ENCODE measurements at regions of chr12 and their contacts with region 1.

Region 1: GRCh38 chr12:110698171-110698902 is 9.4 kb upstream of the HVCN1 start:
- DNase-seq: peak; percentile 78
- H3K4me3 Mint-ChIP-seq: no peak overlapping the region
- H3K27ac Mint-ChIP-seq: peak overlapping the region; percentile 85
- H3K4me1 Mint-ChIP-seq: peaks cover 19% of the 10 kb centered on the region
- H3K27me3 Mint-ChIP-seq: peaks cover 2% of the 10 kb centered on the region

Region 2: DNA sequence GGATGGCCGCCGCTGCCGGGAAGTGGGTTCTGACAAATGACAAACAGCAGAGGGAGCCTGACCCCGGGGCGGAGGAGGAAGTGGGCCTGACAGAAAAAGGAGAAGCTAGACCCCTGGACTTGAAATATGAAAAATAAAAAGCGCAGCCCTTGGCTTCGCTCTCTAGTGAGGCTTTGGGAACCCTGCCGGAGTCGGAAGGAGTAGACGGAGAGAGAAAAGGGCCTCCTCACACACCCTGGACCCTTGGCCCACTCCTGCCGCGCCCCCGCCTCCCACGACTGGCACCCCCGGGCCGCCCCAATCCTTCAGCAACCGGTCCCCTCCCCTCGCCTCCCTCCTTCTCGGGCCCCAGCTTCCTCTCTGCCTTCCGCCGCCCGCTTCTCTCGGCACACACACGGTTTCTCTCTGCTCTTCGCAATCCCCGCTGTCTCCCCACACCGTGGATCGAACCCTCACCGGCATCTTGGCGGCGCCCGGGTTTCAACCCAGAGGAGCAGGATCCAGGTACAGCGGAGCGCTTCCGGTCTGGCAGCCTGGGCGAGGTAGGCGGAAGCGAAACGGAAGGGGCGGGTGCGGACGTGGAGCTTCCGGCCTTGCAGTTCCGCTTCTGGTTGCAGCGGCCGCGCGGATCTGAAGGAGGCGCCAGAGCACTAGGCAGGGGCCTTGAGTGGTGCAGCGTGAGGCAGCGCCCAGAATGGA is 248.4 kb before region 1 on chr12 and contains the start of gene ARPC3:
- intact Hi-C with region 1: loop called (anchors 1 kb)
- DNase-seq: peak; percentile 94
- H3K4me3 Mint-ChIP-seq: peak within 1 kb of the TSS; percentile 100
- H3K27ac Mint-ChIP-seq: peak within 1 kb of the TSS; percentile 100
- H3K4me1 Mint-ChIP-seq: peaks cover 42% of the 10 kb centered on the region
- H3K27me3 Mint-ChIP-seq: no peaks in the 10 kb centered on the region
- total RNA-seq, gene ARPC3: 279 and 290 TPM in 2 replicates

Region 3: GRCh38 chr12:110555577-110556406 is 142.5 kb before region 1 on chr12:
- intact Hi-C with region 1: loop called (anchors 1 kb)
- DNase-seq: no peak
- H3K4me3 Mint-ChIP-seq: no peak overlapping the region
- H3K27ac Mint-ChIP-seq: peak overlapping the region; percentile 57
- H3K4me1 Mint-ChIP-seq: peaks cover 58% of the 10 kb centered on the region
- H3K27me3 Mint-ChIP-seq: no peaks in the 10 kb centered on the region

Region 4: DNA sequence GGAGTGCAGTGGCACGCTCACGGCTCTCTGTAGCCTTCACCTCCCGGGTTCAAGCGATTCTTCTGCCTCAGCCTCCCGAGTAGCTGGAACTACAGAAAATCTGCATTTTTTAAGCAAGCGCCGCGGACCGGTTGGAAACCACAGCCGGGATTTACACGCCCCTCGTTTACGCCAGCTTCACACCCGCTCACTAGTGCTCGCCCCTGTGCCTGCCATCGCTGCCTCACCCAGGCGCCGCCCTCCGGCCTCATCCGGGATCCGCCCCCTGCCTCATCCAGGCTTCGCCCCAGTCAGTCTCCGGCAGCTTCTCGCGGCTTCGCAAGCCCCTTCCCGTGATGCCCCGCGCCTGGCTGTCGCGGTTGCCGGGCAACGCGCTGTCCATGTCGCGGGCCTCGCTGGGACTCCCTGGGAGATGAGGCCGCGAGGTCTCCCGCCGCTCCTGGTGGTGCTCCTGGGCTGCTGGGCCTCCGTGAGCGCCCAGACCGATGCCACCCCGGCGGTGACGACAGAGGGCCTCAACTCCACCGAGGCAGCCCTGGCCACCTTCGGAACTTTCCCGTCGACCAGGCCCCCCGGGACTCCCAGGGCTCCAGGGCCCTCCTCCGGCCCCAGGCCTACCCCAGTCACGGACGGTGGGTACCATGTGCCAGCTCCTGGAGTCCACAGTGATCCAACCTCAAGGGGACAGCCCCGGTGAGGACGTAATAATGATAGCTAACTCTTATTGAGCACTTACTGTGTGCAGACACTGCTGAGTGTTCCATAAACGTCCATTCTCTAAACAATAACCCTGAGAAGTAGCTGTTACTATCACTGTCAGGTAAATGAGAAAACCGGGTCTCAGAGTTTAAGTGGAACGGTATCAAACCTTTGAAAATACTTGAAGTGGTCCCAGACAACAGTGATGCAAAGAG is 84.3 kb before region 1 on chr12 and contains the start of gene TCTN1:
- intact Hi-C with region 1: loop called (anchors 1 kb)
- DNase-seq: peak; percentile 98
- H3K4me3 Mint-ChIP-seq: peak within 1 kb of the TSS; percentile 83
- H3K27ac Mint-ChIP-seq: peak within 1 kb of the TSS; percentile 81
- H3K4me1 Mint-ChIP-seq: peaks cover 8% of the 10 kb centered on the region
- H3K27me3 Mint-ChIP-seq: peaks cover 4% of the 10 kb centered on the region
- total RNA-seq, gene TCTN1: 7.6 and 8.8 TPM in 2 replicates

Region 5: DNA sequence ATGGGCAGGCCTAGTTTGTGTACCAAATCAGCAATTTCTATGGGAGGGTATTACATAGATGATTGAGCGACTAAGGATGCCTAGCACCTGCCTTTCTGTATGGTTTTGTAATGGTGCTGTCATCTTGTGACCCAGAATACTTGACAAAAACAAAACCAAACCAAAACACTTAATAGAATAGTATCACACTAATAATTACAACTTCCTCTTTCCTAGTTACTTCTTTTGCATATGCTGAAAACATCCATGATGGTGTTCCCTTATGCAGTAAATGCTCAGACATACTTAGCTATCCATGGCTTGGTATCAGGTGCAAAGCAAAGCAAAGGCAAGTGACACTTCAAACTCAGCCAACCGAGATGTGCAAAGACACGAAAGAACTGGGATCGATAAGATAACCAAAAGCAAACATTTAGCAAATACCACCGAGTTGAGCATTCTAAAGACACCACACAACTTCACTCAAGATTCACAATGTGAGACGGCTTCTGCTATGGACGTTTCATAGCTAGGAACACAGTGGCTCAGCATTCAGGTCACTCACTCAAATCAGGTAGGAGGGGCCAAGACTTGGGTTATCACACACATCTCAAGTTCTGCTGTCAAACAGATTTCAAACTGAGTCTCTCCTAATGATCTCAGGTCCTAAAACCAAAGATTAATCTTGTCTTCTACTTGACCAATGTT is 20.0 kb after region 1 on chr12:
- intact Hi-C with region 1: no loop called
- DNase-seq: no peak
- H3K4me3 Mint-ChIP-seq: no peak overlapping the region
- H3K27ac Mint-ChIP-seq: peak overlapping the region; percentile 44
- H3K4me1 Mint-ChIP-seq: peaks cover 34% of the 10 kb centered on the region
- H3K27me3 Mint-ChIP-seq: no peaks in the 10 kb centered on the region

Region 6: DNA sequence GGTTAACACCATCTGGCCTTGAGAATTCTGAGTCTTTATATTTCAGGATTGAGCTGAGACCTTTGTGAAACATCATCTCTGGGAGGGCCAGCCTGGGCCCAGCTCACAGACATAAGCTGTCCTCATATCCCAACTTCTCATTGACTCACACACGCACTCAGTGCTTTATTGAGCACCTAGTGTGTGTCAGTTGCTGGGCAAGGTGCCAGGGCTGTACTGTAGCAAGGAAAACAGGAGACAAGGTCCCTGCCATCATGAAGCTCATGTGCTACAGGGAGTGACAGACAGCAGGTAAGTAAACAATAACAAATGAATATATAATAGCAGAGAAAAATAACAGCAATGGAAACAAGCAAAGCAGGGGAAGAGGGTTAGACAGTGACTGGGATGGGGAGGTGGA is 117.9 kb after region 1 on chr12:
- intact Hi-C with region 1: no loop called
- DNase-seq: no peak
- H3K4me3 Mint-ChIP-seq: no peak overlapping the region
- H3K27ac Mint-ChIP-seq: no peak overlapping the region
- H3K4me1 Mint-ChIP-seq: no peaks in the 10 kb centered on the region
- H3K27me3 Mint-ChIP-seq: peaks cover 10% of the 10 kb centered on the region

Region 7: GRCh38 chr12:110888256-110888991 is 190.1 kb after region 1 on chr12:
- intact Hi-C with region 1: loop called (anchors 1 kb)
- DNase-seq: no peak
- H3K4me3 Mint-ChIP-seq: no peak overlapping the region
- H3K27ac Mint-ChIP-seq: no peak overlapping the region
- H3K4me1 Mint-ChIP-seq: peaks cover 5% of the 10 kb centered on the region
- H3K27me3 Mint-ChIP-seq: peaks cover 6% of the 10 kb centered on the region

Measured in activated T-helper 1 cell treated with anti-CD3 and anti-CD28 coated beads, Interleukin-12 subunit alpha, Interleukin-12 subunit beta, Interleukin-2, Interleukin-4 antibody, amounts not matched to agents 30 ng/mL and 10 ng/mL and 1 ng/mL, durations not matched to agents 14 hours and 24 hours and 36 hours (primary cell).